Psoas muscle (tissue), 8 donors: ENCODE measurements at regions of chr10 and their contacts with region 1.

Region 1: GRCh38 chr10:117537436-117537903 is 5.1 kb upstream of the EMX2 start:
- DNase-seq: peak in 1 of 2 donors; percentile 70
- ATAC-seq: peak; percentile 58 to 72 (median 63)
- H3K4me3 ChIP-seq: peak overlapping the region; percentile 56
- H3K27ac ChIP-seq: no peak overlapping the region
- H3K4me1 ChIP-seq: peaks cover 3% of the 10 kb centered on the region
- H3K27me3 ChIP-seq: peaks cover 0 to 98% (median 32%) of the 10 kb centered on the region in 3 donors
- CTCF ChIP-seq: peak; percentile 80

Region 2: DNA sequence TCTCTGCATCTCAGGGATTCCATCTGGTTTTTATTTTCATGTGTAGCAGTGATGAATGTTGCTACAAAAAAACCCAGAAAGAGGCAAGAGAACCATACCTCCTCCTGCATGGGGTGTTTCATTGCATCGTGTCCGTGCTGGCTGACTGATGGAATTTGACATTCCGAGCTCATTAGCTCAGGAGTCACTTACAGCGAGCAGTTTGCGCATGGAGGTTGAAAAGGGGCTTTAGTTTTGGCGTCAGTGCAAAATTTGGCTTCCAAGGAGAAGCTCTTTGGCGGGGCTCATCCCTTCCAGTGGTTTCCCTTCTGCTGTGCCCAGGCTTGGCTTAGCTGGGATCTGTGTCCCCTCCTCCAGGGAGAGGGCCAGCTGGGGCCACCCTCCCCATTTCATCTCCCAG is 30.9 kb after region 1 on chr10:
- intact Hi-C with region 1: no loop called
- DNase-seq: no peak
- ATAC-seq: no peak
- H3K4me3 ChIP-seq: no peak overlapping the region
- H3K27ac ChIP-seq: no peak overlapping the region
- H3K4me1 ChIP-seq: no peaks in the 10 kb centered on the region
- H3K27me3 ChIP-seq: peaks cover 0 to 37% (median 7%) of the 10 kb centered on the region in 3 donors
- CTCF ChIP-seq: no peak

Region 3: DNA sequence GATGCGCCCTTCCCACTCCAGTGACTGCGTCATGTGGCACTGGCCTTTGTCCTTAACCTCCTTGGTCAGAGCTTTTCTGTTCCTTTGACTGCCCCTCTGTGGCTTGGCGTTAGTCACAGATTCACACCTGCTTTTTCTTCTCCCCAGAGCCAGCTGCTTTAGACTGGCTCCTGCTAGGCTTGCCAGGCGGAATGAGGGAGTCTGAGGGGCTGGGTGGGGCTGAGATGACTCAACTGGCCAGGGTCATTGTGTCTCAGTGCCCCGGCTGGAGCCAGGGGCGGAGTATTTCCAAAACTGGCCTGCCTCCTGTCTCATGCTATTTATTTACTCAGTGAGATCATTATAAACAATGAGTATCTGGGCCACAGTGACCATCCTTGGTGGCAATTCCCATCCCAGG is 199.2 kb after region 1 on chr10:
- intact Hi-C with region 1: loop called in 1 of 2 experiments (anchors 10 kb)
- DNase-seq: peak in 1 of 2 donors; percentile 24
- ATAC-seq: peak in 3 of 4 donors; percentile 51 to 87 (median 85)
- H3K4me3 ChIP-seq: no peak overlapping the region
- H3K27ac ChIP-seq: no peak overlapping the region
- H3K4me1 ChIP-seq: no peaks in the 10 kb centered on the region
- H3K27me3 ChIP-seq: peaks cover 0 to 40% (median 6%) of the 10 kb centered on the region in 3 donors
- CTCF ChIP-seq: no peak

Region 4: DNA sequence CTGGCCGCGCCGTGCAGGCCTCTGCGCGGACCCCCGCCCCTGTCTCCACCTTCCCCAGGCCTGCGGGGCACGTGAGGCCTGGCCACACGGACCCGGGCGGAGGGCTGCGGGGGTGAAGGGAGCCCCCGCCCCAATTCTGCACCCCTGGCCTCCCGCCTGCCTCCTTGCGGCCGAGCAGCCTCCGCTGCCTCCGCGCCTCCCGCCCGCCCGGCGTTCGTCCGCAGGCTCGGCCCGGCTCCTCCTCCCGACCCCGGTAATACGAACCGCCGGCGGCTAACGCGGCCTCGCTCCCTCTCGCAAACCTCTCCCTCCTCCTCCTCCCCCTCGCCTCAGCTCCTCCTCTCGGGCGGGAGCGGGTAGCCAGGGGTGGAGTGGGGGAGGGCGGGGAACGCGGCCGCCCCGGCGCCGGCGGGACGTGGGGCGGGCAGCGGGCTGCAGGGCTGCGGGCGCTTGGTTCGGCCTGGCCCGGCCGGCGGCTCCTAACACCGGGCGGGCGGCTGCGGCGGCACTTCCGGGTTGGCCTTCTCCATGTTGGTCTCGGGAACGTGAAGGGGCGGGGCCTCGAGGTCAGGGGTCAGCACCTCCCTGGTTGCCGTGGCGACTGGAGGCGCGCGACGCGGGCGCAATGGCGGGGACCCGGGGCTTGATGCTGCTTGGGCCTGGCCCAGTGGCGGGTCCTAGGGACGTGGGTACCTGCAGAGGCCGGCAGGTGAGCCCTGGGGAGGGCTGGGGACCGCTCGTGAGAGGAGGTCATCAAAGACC is 509.1 kb after region 1 on chr10 and contains the start of gene RAB11FIP2:
- intact Hi-C with region 1: loop called in 1 of 2 experiments (anchors 5 kb)
- DNase-seq: peak; percentile 96 to 98
- ATAC-seq: peak; percentile 91 to 94 (median 92)
- H3K4me3 ChIP-seq: peak within 1 kb of the TSS; percentile 86
- H3K27ac ChIP-seq: peak within 1 kb of the TSS; percentile 93
- H3K4me1 ChIP-seq: peaks cover 37% of the 10 kb centered on the region
- H3K27me3 ChIP-seq: no peaks in the 10 kb centered on the region
- CTCF ChIP-seq: peak; percentile 21
- total RNA-seq, gene RAB11FIP2: 9.1 to 12.0 (median 10.5) TPM

Region 5: GRCh38 chr10:118106426-118106825 is 569.0 kb after region 1 on chr10:
- intact Hi-C with region 1: loop called in 1 of 2 experiments (anchors 10 kb)
- DNase-seq: no peak
- ATAC-seq: no peak
- H3K4me3 ChIP-seq: no peak overlapping the region
- H3K27ac ChIP-seq: no peak overlapping the region
- H3K4me1 ChIP-seq: no peaks in the 10 kb centered on the region
- H3K27me3 ChIP-seq: no peaks in the 10 kb centered on the region
- CTCF ChIP-seq: peak; percentile 30